ENCODE measurements at regions of chr7 and their contacts with region 1.

Region 1: DNA sequence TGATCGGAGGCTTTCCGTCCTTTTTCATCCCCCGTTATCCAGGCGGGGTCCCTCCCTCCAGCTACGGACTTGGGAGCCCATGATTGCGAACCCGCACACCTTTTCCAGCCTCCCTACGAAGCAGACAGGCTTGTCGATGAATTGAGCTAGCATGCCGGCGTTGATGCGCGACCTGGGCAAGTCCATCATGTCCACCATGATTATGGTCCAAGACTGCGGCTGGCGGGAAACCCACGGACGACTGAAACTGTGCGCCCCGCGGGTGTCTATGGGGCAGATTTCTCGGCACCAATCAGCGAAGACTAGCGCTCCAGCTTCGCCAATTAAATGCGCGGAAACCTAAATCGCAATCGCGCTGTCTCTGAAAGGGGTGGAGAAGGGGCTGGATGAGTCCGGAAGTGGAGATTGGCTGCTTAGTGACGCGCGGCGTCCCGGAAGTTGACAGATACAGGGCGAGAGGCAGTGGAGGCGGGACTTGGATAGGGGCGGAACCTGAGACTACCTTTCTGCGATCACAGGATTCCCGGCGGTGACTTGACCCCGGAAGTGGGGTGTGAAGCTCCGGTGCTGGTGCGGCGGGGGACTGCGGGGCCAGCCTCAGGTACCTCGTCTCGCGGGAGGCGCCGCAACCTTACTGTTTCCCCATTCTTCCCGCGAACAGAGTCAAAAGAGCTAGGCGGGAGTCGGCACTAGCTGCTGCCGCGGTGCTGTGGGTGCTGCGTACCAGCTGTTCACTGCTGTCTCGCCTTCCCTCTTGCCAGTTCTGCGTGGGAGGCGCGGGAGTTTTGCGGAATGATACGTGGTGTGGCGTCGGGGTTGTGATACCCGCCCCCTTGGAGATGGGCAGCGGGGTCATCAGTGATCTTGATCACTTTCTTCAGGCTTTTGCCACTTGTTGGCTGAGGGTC is at the start of gene UMAD1:
- DNase-seq: peak; percentile 99
- H3K4me3 ChIP-seq: peak within 1 kb of the TSS; percentile 68 to 87 (median 78)
- H3K27ac ChIP-seq: peak within 1 kb of the TSS; percentile 79 to 92 (median 90)
- H3K4me1 ChIP-seq: peaks cover 0 to 22% (median 16%) of the 10 kb centered on the region in 4 donors
- H3K27me3 ChIP-seq: no peaks in the 10 kb centered on the region
- CTCF ChIP-seq: no peak
- EP300 ChIP-seq: no peak
- POLR2A ChIP-seq: peak; percentile 40 to 69
- total RNA-seq, gene UMAD1: 11.1 to 20.7 (median 15.5) TPM

Region 2: GRCh38 chr7:7566651-7567611 is 73.5 kb before region 1 on chr7 and contains the start of gene MIOS:
- intact Hi-C with region 1: loop called (anchors 2 kb)
- DNase-seq: peak; percentile 92
- H3K4me3 ChIP-seq: peak within 1 kb of the TSS; percentile 52 to 88 (median 70)
- H3K27ac ChIP-seq: peak within 1 kb of the TSS; percentile 84 to 94 (median 91)
- H3K4me1 ChIP-seq: peaks cover 0 to 21% (median 16%) of the 10 kb centered on the region in 4 donors
- H3K27me3 ChIP-seq: no peaks in the 10 kb centered on the region
- CTCF ChIP-seq: no peak
- EP300 ChIP-seq: no peak
- POLR2A ChIP-seq: no peak
- total RNA-seq, gene MIOS: 20.8 to 40.3 (median 30.7) TPM

Region 3: GRCh38 chr7:7779878-7780277 is 139.4 kb after region 1 on chr7:
- intact Hi-C with region 1: no loop called
- DNase-seq: no peak
- H3K4me3 ChIP-seq: no peak overlapping the region
- H3K27ac ChIP-seq: no peak overlapping the region
- H3K4me1 ChIP-seq: peaks cover 0 to 3% (median 0%) of the 10 kb centered on the region in 4 donors
- H3K27me3 ChIP-seq: no peaks in the 10 kb centered on the region
- CTCF ChIP-seq: no peak
- EP300 ChIP-seq: no peak
- POLR2A ChIP-seq: no peak

Region 4: GRCh38 chr7:7968543-7969305 is 328.2 kb after region 1 on chr7 and contains the start of gene GLCCI1:
- intact Hi-C with region 1: loop called (anchors 10 kb)
- DNase-seq: peak; percentile 98
- H3K4me3 ChIP-seq: peak within 1 kb of the TSS; percentile 87 to 95 (median 92)
- H3K27ac ChIP-seq: peak within 1 kb of the TSS; percentile 89 to 99 (median 97)
- H3K4me1 ChIP-seq: peaks cover 0 to 18% (median 7%) of the 10 kb centered on the region in 4 donors
- H3K27me3 ChIP-seq: no peaks in the 10 kb centered on the region
- CTCF ChIP-seq: no peak
- EP300 ChIP-seq: no peak
- POLR2A ChIP-seq: peak; percentile 58 to 79
- total RNA-seq, gene GLCCI1: 3.8 to 17.7 (median 10.6) TPM